CD4-positive, alpha-beta memory T cell (primary cell): ENCODE measurements at regions of chr19 and their contacts with region 1.

Region 1: DNA sequence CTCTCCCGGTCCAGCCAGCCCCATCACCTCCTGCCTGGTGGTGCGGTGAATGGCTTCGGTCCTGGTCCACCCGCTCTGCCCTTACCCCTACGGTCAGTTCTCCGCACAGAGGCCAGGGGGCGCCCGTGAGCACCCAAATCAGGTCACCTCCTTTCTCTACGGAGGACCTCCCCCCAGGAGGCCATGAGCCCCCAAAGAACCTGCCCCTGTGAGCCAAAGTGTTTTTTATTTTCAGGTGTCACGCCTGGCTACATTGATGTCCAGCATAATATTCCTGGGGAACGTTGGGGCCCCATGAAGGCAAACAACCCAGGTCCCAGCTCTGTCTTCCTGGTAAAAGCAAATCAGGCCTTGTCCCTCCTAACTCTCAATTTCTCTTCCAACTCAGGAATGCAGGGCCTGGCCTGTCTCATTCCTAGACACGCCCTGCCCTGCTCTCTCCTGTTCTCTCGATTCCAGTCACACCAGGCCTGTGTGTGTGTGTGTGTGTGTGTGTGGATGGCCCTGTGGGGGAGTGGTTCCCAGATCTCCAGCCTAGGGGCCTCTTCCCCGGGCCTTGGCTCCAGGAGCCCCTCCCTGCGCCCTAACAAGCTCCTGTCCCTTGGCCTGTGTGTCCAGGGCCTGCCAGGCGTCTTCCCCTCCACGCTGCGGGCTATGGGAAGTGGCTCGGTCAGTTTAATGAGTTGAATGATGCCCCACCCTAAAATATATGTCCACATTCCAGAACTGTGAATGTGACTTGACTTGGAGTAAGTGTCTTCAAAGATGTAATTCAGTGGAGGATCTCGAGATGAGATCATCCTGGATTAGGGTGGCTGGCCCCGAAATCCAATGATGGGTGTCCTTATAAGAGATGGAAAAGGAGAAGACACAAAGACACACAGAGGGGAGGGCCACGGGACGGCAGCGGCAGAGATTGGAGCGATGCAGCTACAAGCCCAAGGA is 9.8 kb upstream of the GIPC1 start:
- DNase-seq: peak; percentile 61 to 73 (median 69)
- H3K4me3 ChIP-seq: no peak overlapping the region
- H3K4me3 Mint-ChIP-seq: peak overlapping the region in 7 of 8 donors; percentile 33 to 76 (median 68)
- H3K27ac ChIP-seq: peak overlapping the region; percentile 49
- H3K27ac Mint-ChIP-seq: peak overlapping the region; percentile 90 to 99 (median 97)
- H3K4me1 ChIP-seq: peaks cover 46% of the 10 kb centered on the region
- H3K4me1 Mint-ChIP-seq: peaks cover 34 to 74% (median 47%) of the 10 kb centered on the region in 4 donors
- H3K27me3 ChIP-seq: no peaks in the 10 kb centered on the region
- H3K27me3 Mint-ChIP-seq: no peaks in the 10 kb centered on the region

Region 2: GRCh38 chr19:14383661-14384555 is 121.9 kb before region 1 on chr19:
- CTCF ChIA-PET with region 1: interaction called, 3 read pairs
- POLR2A ChIA-PET with region 1: interaction called, 12 read pairs
- intact Hi-C with region 1: no loop called
- DNase-seq: peak in 3 of 5 donors; percentile 40 to 91 (median 41)
- H3K4me3 ChIP-seq: peak overlapping the region; percentile 40 to 82
- H3K4me3 Mint-ChIP-seq: peak overlapping the region; percentile 91 to 99 (median 98)
- H3K27ac ChIP-seq: peak overlapping the region; percentile 99
- H3K27ac Mint-ChIP-seq: peak overlapping the region; percentile 96 to 100 (median 98)
- H3K4me1 ChIP-seq: peaks cover 41% of the 10 kb centered on the region
- H3K4me1 Mint-ChIP-seq: peaks cover 19 to 66% (median 37%) of the 10 kb centered on the region in 4 donors
- H3K27me3 ChIP-seq: no peaks in the 10 kb centered on the region
- H3K27me3 Mint-ChIP-seq: peaks cover 0 to 4% of the 10 kb centered on the region in 2 donors

Region 3: DNA sequence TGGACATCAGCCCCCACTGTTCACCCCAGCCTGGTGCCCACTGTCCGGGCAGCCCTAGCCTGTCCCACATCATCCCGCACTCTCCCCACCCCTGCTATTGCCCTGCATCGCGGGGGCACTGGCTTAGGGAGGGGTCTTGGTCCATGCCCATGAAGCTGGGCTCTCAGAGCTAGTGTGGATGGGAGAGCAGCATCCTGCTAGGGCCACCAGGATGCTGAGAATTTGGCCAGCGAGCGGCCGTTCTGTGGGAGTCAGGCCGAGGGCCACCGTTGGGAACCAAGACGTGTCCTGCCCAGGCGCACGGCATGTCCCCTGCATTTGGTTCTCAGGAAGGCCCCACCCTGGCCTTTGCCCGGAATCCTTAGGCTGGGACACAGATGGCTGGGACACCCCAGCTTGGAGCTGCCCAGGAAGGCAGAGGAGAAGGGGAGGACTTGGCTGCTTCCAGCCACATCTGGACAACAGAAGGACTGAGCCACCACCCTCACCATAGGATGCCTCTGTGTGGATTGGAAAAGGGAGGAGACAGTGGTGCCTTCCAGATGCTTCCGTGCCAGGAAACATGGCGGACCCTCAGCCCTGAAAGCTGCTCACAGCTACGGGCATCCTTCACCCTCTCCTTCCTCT is 109.9 kb before region 1 on chr19:
- CTCF ChIA-PET with region 1: no interaction called
- POLR2A ChIA-PET with region 1: no interaction called
- intact Hi-C with region 1: no loop called
- DNase-seq: no peak
- H3K4me3 ChIP-seq: no peak overlapping the region
- H3K4me3 Mint-ChIP-seq: no peak overlapping the region
- H3K27ac ChIP-seq: no peak overlapping the region
- H3K27ac Mint-ChIP-seq: peak overlapping the region in 2 of 7 donors; percentile 65 to 87
- H3K4me1 ChIP-seq: no peaks in the 10 kb centered on the region
- H3K4me1 Mint-ChIP-seq: peaks cover 0 to 5% (median 4%) of the 10 kb centered on the region in 4 donors
- H3K27me3 ChIP-seq: no peaks in the 10 kb centered on the region
- H3K27me3 Mint-ChIP-seq: no peaks in the 10 kb centered on the region

Region 4: GRCh38 chr19:14487370-14488125 is 18.2 kb before region 1 on chr19:
- CTCF ChIA-PET with region 1: interaction called, 11 read pairs
- POLR2A ChIA-PET with region 1: interaction called, 13 read pairs
- intact Hi-C with region 1: loop called (anchors 1 kb)
- DNase-seq: no peak
- H3K4me3 ChIP-seq: no peak overlapping the region
- H3K4me3 Mint-ChIP-seq: no peak overlapping the region
- H3K27ac ChIP-seq: no peak overlapping the region
- H3K27ac Mint-ChIP-seq: no peak overlapping the region
- H3K4me1 ChIP-seq: peaks cover 5% of the 10 kb centered on the region
- H3K4me1 Mint-ChIP-seq: peaks cover 7 to 9% (median 8%) of the 10 kb centered on the region in 4 donors
- H3K27me3 ChIP-seq: no peaks in the 10 kb centered on the region
- H3K27me3 Mint-ChIP-seq: no peaks in the 10 kb centered on the region

Region 5: GRCh38 chr19:14550201-14550784 is 44.5 kb after region 1 on chr19:
- CTCF ChIA-PET with region 1: interaction called, 142 read pairs
- POLR2A ChIA-PET with region 1: interaction called, 33 read pairs
- intact Hi-C with region 1: loop called (anchors 1 kb)
- DNase-seq: no peak
- H3K4me3 ChIP-seq: no peak overlapping the region
- H3K4me3 Mint-ChIP-seq: peak overlapping the region in 1 of 8 donors; percentile 36
- H3K27ac ChIP-seq: no peak overlapping the region
- H3K27ac Mint-ChIP-seq: peak overlapping the region in 4 of 7 donors; percentile 63 to 95 (median 73)
- H3K4me1 ChIP-seq: peaks cover 38% of the 10 kb centered on the region
- H3K4me1 Mint-ChIP-seq: peaks cover 19 to 64% (median 34%) of the 10 kb centered on the region in 4 donors
- H3K27me3 ChIP-seq: no peaks in the 10 kb centered on the region
- H3K27me3 Mint-ChIP-seq: no peaks in the 10 kb centered on the region

Region 6: DNA sequence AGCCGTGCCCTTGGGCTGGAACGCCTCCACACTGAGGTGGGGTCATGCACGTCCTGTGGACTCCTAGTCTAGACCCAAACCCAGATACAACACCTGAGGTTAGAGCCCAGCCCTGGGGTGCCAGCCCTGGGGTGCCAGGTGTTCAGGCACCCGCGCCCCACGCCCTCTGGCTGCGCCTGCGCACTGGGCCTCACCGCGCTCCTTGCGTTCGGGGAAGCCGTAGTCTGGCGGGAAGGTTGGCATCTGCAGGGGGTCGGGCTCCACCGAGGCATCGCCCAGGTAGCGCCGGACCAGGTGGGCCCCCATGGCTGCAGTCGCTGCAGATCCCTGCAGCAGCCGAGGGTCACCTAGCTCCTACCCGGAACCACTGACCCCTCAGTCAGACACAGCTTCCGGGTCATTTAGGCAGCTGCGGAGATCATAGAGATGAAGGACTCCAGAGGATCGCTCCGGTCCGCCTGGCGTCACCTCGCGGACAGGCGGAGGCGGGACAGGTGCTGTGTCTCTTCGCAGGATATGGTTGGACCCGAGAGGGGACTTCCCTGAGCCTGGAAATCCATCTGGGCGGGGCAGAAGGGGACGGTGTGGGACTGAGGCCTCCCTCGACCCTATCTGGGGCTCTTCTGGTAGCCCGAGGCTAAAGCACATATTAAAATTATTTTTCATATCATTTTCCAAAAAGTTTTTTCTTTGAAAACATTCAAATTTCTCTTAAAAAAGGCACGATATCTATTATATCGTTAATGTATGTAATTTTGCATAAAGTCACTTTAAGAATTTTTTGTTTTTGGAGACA is 66.1 kb after region 1 on chr19 and contains the start of gene NDUFB7:
- CTCF ChIA-PET with region 1: interaction called, 10 read pairs
- POLR2A ChIA-PET with region 1: interaction called, 10 read pairs
- intact Hi-C with region 1: no loop called
- DNase-seq: peak; percentile 91 to 93 (median 93)
- H3K4me3 ChIP-seq: peak within 1 kb of the TSS; percentile 76 to 91
- H3K4me3 Mint-ChIP-seq: peak within 1 kb of the TSS; percentile 95 to 97 (median 96)
- H3K27ac ChIP-seq: peak within 1 kb of the TSS; percentile 68
- H3K27ac Mint-ChIP-seq: peak within 1 kb of the TSS; percentile 89 to 96 (median 93)
- H3K4me1 ChIP-seq: peaks cover 33% of the 10 kb centered on the region
- H3K4me1 Mint-ChIP-seq: peaks cover 16 to 55% (median 43%) of the 10 kb centered on the region in 4 donors
- H3K27me3 ChIP-seq: no peaks in the 10 kb centered on the region
- H3K27me3 Mint-ChIP-seq: no peaks in the 10 kb centered on the region
- total RNA-seq, gene NDUFB7: 56.6 to 67.2 TPM

Region 7: GRCh38 chr19:14674764-14675163 is 169.0 kb after region 1 on chr19 and contains the start of gene ADGRE3:
- CTCF ChIA-PET with region 1: no interaction called
- POLR2A ChIA-PET with region 1: no interaction called
- intact Hi-C with region 1: no loop called
- DNase-seq: no peak
- H3K4me3 ChIP-seq: no peak within 1 kb of the TSS
- H3K4me3 Mint-ChIP-seq: no peak within 1 kb of the TSS
- H3K27ac ChIP-seq: no peak within 1 kb of the TSS
- H3K27ac Mint-ChIP-seq: peak within 1 kb of the TSS in 5 of 7 donors; percentile 29 to 86 (median 57)
- H3K4me1 ChIP-seq: peaks cover 24% of the 10 kb centered on the region
- H3K4me1 Mint-ChIP-seq: peaks cover 0 to 24% (median 6%) of the 10 kb centered on the region in 4 donors
- H3K27me3 ChIP-seq: no peaks in the 10 kb centered on the region
- H3K27me3 Mint-ChIP-seq: peaks cover 12 to 15% of the 10 kb centered on the region in 2 donors
- total RNA-seq, gene ADGRE3: not detected